CD4-positive, alpha-beta T cell (primary cell): ENCODE measurements at regions of chr7 and their contacts with region 1.

Region 1: GRCh38 chr7:50696810-50697582 is 85.7 kb downstream of the GRB10 start:
- DNase-seq: peak in 6 of 14 experiments; percentile 5 to 51 (median 20)
- ATAC-seq: peak; percentile 46
- H3K4me3 ChIP-seq: no peak overlapping the region
- H3K4me3 Mint-ChIP-seq: no peak overlapping the region
- H3K27ac ChIP-seq: no peak overlapping the region
- H3K27ac Mint-ChIP-seq: no peak overlapping the region
- H3K4me1 ChIP-seq: no peaks in the 10 kb centered on the region
- H3K4me1 Mint-ChIP-seq: peaks cover 4% of the 10 kb centered on the region
- H3K27me3 ChIP-seq: no peaks in the 10 kb centered on the region
- H3K27me3 Mint-ChIP-seq: no peaks in the 10 kb centered on the region
- CTCF ChIP-seq: peak; percentile 62

Region 2: GRCh38 chr7:50728184-50728583 is 31.2 kb after region 1 on chr7:
- CTCF ChIA-PET with region 1: no interaction called
- POLR2A ChIA-PET with region 1: no interaction called
- intact Hi-C with region 1: no loop called
- DNase-seq: no peak
- ATAC-seq: no peak
- H3K4me3 ChIP-seq: no peak overlapping the region
- H3K4me3 Mint-ChIP-seq: no peak overlapping the region
- H3K27ac ChIP-seq: no peak overlapping the region
- H3K27ac Mint-ChIP-seq: no peak overlapping the region
- H3K4me1 ChIP-seq: peaks cover 10% of the 10 kb centered on the region
- H3K4me1 Mint-ChIP-seq: peaks cover 11% of the 10 kb centered on the region
- H3K27me3 ChIP-seq: no peaks in the 10 kb centered on the region
- H3K27me3 Mint-ChIP-seq: no peaks in the 10 kb centered on the region
- CTCF ChIP-seq: no peak

Region 3: GRCh38 chr7:50793115-50793946 is 96.3 kb after region 1 on chr7:
- CTCF ChIA-PET with region 1: no interaction called
- POLR2A ChIA-PET with region 1: no interaction called
- intact Hi-C with region 1: loop called in 1 of 2 experiments (anchors 5 kb)
- DNase-seq: peak in 8 of 14 experiments; percentile 28 to 69 (median 40)
- ATAC-seq: peak; percentile 39
- H3K4me3 ChIP-seq: peak overlapping the region; percentile 34
- H3K4me3 Mint-ChIP-seq: peak overlapping the region; percentile 86
- H3K27ac ChIP-seq: no peak overlapping the region
- H3K27ac Mint-ChIP-seq: peak overlapping the region; percentile 8
- H3K4me1 ChIP-seq: peaks cover 18% of the 10 kb centered on the region
- H3K4me1 Mint-ChIP-seq: peaks cover 19% of the 10 kb centered on the region
- H3K27me3 ChIP-seq: peaks cover 25 to 27% of the 10 kb centered on the region in 2 experiments
- H3K27me3 Mint-ChIP-seq: peaks cover 51% of the 10 kb centered on the region
- CTCF ChIP-seq: no peak

Region 4: GRCh38 chr7:51067757-51068156 is 370.8 kb after region 1 on chr7:
- CTCF ChIA-PET with region 1: no interaction called
- POLR2A ChIA-PET with region 1: no interaction called
- intact Hi-C with region 1: loop called in 1 of 2 experiments (anchors 2 kb)
- DNase-seq: peak; percentile 7 to 66 (median 32)
- ATAC-seq: no peak
- H3K4me3 ChIP-seq: no peak overlapping the region
- H3K4me3 Mint-ChIP-seq: no peak overlapping the region
- H3K27ac ChIP-seq: no peak overlapping the region
- H3K27ac Mint-ChIP-seq: no peak overlapping the region
- H3K4me1 ChIP-seq: no peaks in the 10 kb centered on the region
- H3K4me1 Mint-ChIP-seq: no peaks in the 10 kb centered on the region
- H3K27me3 ChIP-seq: no peaks in the 10 kb centered on the region
- H3K27me3 Mint-ChIP-seq: no peaks in the 10 kb centered on the region
- CTCF ChIP-seq: peak; percentile 62

Region 5: DNA sequence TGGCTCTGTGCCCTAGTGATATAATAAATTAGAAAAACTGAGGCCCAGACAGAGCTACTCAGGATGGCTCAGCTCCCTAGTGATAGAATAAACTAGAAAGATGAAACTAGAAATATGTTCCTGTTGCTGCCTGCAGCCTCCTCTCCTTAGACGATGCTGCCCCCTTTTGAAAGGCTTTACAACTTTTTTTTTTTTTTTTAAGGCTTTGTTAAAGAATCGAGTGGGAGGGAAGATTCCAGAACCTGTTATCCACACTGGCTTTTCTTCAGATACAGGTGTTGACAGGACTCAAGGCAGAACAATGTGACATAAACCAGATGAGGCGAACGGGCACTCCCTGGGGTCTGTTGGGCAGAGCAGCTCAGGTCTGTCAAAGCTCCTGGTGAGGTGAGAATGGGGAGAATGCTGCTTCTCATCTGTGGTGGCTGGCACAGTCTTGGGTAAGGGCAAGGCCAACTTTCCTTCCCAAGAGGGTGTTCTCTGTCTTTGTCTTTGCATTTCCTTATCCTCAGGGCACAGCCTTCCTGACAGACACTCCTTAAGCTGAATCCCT is 444.5 kb after region 1 on chr7:
- CTCF ChIA-PET with region 1: no interaction called
- POLR2A ChIA-PET with region 1: no interaction called
- intact Hi-C with region 1: loop called (anchors 5 kb)
- DNase-seq: peak in 3 of 14 experiments; percentile 10 to 42 (median 38)
- ATAC-seq: peak; percentile 43
- H3K4me3 ChIP-seq: no peak overlapping the region
- H3K4me3 Mint-ChIP-seq: no peak overlapping the region
- H3K27ac ChIP-seq: no peak overlapping the region
- H3K27ac Mint-ChIP-seq: no peak overlapping the region
- H3K4me1 ChIP-seq: no peaks in the 10 kb centered on the region
- H3K4me1 Mint-ChIP-seq: peaks cover 14% of the 10 kb centered on the region
- H3K27me3 ChIP-seq: no peaks in the 10 kb centered on the region
- H3K27me3 Mint-ChIP-seq: no peaks in the 10 kb centered on the region
- CTCF ChIP-seq: no peak

Region 6: DNA sequence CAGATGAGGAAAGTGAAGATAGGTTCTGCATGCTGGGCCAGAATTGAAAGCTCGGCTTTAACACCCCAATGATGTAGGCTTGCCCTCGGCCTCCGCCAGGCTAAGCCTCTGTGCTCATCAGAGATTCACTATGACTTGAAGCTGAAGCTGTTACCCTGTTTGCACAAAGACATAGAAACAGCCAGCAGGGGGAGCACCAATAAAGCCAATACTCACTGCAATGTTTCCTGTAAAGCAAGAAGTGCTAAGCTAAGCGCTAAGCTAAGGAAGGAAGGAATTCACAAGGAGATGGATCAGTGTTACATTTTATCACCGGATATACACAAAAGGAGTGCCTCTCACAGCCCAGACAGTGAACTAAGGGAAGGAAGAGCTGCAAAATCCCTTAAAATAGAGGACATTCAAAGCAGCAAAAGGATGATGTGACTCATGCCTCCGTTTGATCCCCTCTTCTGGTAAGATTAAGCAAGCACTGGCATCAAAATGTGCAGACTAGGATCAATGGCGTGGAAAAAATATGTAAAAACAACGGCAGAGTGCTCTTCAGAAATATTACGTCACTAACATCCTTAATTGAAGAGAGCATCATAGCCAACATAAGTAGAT is 465.8 kb after region 1 on chr7:
- CTCF ChIA-PET with region 1: no interaction called
- POLR2A ChIA-PET with region 1: interaction called, 3 read pairs
- intact Hi-C with region 1: loop called (anchors 2 to 5 kb)
- DNase-seq: peak; percentile 30 to 73 (median 48)
- ATAC-seq: peak; percentile 71
- H3K4me3 ChIP-seq: no peak overlapping the region
- H3K4me3 Mint-ChIP-seq: no peak overlapping the region
- H3K27ac ChIP-seq: no peak overlapping the region
- H3K27ac Mint-ChIP-seq: no peak overlapping the region
- H3K4me1 ChIP-seq: no peaks in the 10 kb centered on the region
- H3K4me1 Mint-ChIP-seq: peaks cover 4% of the 10 kb centered on the region
- H3K27me3 ChIP-seq: peaks cover 0 to 4% of the 10 kb centered on the region in 2 experiments
- H3K27me3 Mint-ChIP-seq: peaks cover 32% of the 10 kb centered on the region
- CTCF ChIP-seq: peak; percentile 77